Mammary epithelial cell (primary cell): ENCODE measurements at regions of chr14 and their contacts with region 1.

Region 1: DNA sequence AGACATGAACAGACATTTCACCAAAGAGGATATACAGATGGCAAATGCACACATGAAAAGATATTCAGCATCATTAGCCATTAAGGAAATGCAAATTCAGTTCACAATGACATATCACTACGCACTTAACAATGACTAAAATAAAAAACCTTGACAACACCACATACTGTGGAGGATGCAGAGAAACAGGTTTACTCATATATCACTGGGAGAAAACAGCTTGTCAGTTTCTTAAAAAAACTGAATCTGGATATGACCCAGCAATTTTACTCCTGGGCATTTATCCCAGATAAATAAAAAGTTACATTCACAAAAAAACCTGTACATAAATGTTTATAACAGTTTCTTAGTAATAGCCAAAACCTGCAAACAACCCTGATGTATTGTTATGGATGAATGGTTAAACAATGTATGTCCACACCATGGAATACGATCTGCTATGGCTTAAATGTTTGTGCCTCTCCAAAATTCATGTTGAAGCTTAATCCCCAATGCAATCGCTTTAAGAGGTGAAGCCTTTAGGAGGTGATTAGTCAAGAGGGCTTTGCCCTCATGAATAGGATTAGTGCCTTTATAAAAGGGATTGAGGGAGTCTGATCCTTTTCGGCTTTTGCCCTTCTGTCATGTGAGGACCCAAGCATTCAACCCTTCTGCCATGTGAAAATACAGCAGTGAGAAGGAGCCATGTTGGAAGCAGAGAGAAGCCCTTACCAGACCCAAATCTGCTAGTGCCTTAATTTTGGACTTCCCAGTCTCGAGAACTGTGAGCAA is 36.0 kb upstream of the PPP4R3A start:
- DNase-seq: no peak
- H3K4me3 ChIP-seq: no peak overlapping the region
- H3K27ac ChIP-seq: no peak overlapping the region
- H3K4me1 ChIP-seq: no peaks in the 10 kb centered on the region
- H3K27me3 ChIP-seq: no peaks in the 10 kb centered on the region
- CTCF ChIP-seq: no peak

Region 2: GRCh38 chr14:91580876-91581577 is 34.9 kb after region 1 on chr14:
- CTCF ChIA-PET with region 1: no interaction called
- dilution Hi-C with region 1: loop called (anchors 5 kb)
- in situ Hi-C with region 1: no loop called
- intact Hi-C with region 1: no loop called
- DNase-seq: no peak
- H3K4me3 ChIP-seq: no peak overlapping the region
- H3K27ac ChIP-seq: no peak overlapping the region
- H3K4me1 ChIP-seq: no peaks in the 10 kb centered on the region
- H3K27me3 ChIP-seq: no peaks in the 10 kb centered on the region
- CTCF ChIP-seq: no peak

Region 3: GRCh38 chr14:92144708-92145107 is 598.6 kb after region 1 on chr14:
- CTCF ChIA-PET with region 1: no interaction called
- dilution Hi-C with region 1: no loop called
- in situ Hi-C with region 1: no loop called
- intact Hi-C with region 1: no loop called
- DNase-seq: no peak
- H3K4me3 ChIP-seq: no peak overlapping the region
- H3K27ac ChIP-seq: no peak overlapping the region
- H3K4me1 ChIP-seq: no peaks in the 10 kb centered on the region
- H3K27me3 ChIP-seq: no peaks in the 10 kb centered on the region
- CTCF ChIP-seq: no peak